SK-N-SH (cell line): ENCODE measurements at regions of chr4 and their contacts with region 1.

Region 1: DNA sequence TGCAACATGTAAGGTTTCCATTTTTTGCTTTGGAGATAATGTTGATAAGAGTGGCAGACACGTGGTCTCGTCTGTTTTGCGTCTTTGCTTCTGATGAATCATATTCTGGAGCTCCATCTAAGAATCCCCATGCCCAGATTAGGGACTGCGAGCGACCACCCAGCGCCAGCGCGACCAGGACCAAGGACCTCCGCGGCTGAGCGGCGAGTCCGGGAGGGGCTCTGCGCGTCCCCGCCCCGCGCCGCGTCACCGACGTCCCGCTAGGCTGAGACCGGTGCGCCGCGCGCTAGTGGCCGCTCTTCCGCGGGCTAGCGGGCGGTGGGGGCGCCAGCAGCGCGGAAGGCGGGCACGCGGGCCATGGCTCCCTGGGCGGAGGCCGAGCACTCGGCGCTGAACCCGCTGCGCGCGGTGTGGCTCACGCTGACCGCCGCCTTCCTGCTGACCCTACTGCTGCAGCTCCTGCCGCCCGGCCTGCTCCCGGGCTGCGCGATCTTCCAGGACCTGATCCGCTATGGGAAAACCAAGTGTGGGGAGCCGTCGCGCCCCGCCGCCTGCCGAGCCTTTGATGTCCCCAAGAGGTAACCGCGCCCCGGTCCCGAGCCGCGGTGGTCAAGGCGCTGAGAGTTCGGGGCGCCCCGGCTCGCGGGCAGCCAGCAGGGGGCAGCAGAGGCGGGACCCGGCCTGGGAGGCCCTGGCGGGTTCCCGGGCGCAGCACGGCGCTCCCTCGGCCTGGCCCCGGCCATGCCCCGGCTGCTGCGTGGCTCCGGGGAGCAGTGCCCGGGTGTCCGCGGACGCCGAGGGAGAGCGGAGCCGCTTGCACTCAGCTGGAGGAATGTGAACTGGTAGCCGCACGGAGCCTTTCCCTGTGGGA is at the start of gene SRD5A3:
- DNase-seq: peak; percentile 96
- H3K4me3 ChIP-seq: peak within 1 kb of the TSS; percentile 67 to 70
- H3K27ac ChIP-seq: peak within 1 kb of the TSS; percentile 74 to 92
- H3K4me1 ChIP-seq: peaks cover 0 to 5% of the 10 kb centered on the region in 2 experiments; a peak in 3 of 4 replicates
- H3K27me3 ChIP-seq: no peaks in the 10 kb centered on the region; the same call in 1 of the 2 replicates
- CTCF ChIP-seq: peak; percentile 83
- EP300 ChIP-seq: no peak
- RAD21 ChIP-seq: peak; percentile 65
- polyA plus RNA-seq, gene SRD5A3: 5.1 TPM in 2 replicates

Region 2: GRCh38 chr4:55312489-55313101 is 33.6 kb before region 1 on chr4:
- CTCF ChIA-PET with region 1: interaction called, 13 read pairs
- POLR2A ChIA-PET with region 1: no interaction called
- DNase-seq: peak; percentile 19
- H3K4me3 ChIP-seq: no peak overlapping the region
- H3K27ac ChIP-seq: no peak overlapping the region
- H3K4me1 ChIP-seq: no peaks in the 10 kb centered on the region
- H3K27me3 ChIP-seq: peaks cover 4% of the 10 kb centered on the region; the same call in 1 of the 2 replicates
- CTCF ChIP-seq: peak; percentile 68
- EP300 ChIP-seq: no peak
- RAD21 ChIP-seq: peak; percentile 50; the same call in 1 of the 2 replicates

Region 3: DNA sequence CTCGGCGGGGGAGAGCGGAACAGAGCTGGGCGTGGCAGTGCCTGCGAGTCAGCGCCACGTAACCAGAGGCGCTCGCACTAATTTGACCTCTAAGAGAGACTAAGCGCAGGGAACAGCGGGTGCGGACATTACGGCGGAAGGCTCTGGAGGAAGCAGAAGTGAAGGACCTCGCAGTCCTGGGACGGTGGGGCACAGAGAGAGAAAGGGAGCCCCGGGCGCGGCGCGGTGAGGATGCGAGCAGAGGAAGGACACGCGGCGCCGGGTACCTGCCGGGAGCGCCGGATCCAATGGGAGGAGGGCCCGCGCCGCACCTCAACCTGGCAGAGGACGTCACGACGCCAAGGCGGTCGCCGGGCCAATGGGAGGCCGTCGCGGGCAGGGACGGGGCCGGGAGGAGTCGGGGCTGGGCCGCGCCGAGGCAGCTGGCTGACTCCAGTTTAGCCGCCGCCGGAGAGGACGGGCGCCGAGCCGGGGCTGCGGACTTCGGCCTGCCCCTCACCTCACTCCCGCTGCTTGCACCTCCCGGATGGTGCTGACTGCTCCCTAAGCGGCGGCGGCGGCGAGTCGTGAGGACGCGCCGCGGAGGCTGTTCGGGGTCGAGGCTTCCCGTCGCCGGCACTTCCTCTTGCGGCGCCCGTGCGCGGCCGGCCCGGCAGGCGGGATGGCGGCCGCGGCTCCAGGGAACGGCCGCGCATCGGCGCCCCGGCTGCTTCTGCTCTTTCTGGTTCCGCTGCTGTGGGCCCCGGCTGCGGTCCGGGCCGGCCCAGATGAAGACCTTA is 49.5 kb after region 1 on chr4 and contains the start of gene TMEM165:
- CTCF ChIA-PET with region 1: interaction called, 12 read pairs
- POLR2A ChIA-PET with region 1: interaction called, 6 read pairs
- DNase-seq: peak; percentile 95
- H3K4me3 ChIP-seq: peak within 1 kb of the TSS; percentile 81 to 90
- H3K27ac ChIP-seq: peak within 1 kb of the TSS; percentile 86 to 89
- H3K4me1 ChIP-seq: peaks cover 0 to 5% of the 10 kb centered on the region in 2 experiments; a peak in 2 of 4 replicates
- H3K27me3 ChIP-seq: no peaks in the 10 kb centered on the region
- CTCF ChIP-seq: no peak
- EP300 ChIP-seq: no peak
- RAD21 ChIP-seq: no peak
- polyA plus RNA-seq, gene TMEM165: 58.6 and 89.2 TPM in 2 replicates

Region 4: GRCh38 chr4:55444827-55445226 is 98.6 kb after region 1 on chr4:
- CTCF ChIA-PET with region 1: interaction called, 14 read pairs
- POLR2A ChIA-PET with region 1: no interaction called
- DNase-seq: no peak
- H3K4me3 ChIP-seq: no peak overlapping the region
- H3K27ac ChIP-seq: peak overlapping the region in 1 of 2 experiments; percentile 59; a peak in 2 of 4 replicates
- H3K4me1 ChIP-seq: peaks cover 2 to 28% of the 10 kb centered on the region in 2 experiments; a peak in 3 of 4 replicates
- H3K27me3 ChIP-seq: no peaks in the 10 kb centered on the region
- CTCF ChIP-seq: peak; percentile 65
- EP300 ChIP-seq: no peak
- RAD21 ChIP-seq: peak; percentile 68